ENCODE measurements at regions of chr5 and their contacts with region 1.

Region 1: DNA sequence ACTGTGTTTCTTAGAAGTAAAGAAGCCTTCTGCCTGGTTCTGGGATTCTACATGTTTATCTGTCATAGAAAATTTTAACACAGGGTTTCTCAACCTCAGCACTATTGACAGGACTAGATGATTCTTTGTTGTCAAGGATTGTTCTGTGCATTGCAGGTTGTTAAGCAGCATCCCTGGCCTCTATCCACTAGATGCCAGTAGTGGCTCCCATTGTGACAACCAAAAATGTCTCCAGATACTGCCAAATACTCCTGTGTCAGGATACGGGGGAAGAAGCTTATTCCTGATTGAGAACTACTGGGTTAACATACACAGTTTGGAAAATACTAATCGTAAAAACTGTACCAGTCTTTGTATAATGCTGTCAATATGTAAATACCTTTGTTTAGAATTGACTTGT is 167.1 kb downstream of the NIPBL start:
- DNase-seq: no peak
- ATAC-seq: no peak
- H3K4me3 ChIP-seq: no peak overlapping the region
- H3K27ac ChIP-seq: no peak overlapping the region
- H3K4me1 ChIP-seq: no peaks in the 10 kb centered on the region
- H3K27me3 ChIP-seq: no peaks in the 10 kb centered on the region
- CTCF ChIP-seq: no peak

Region 2: GRCh38 chr5:37086466-37087173 is 42.9 kb after region 1 on chr5:
- intact Hi-C with region 1: no loop called
- DNase-seq: no peak
- ATAC-seq: no peak
- H3K4me3 ChIP-seq: no peak overlapping the region
- H3K27ac ChIP-seq: no peak overlapping the region
- H3K4me1 ChIP-seq: no peaks in the 10 kb centered on the region
- H3K27me3 ChIP-seq: no peaks in the 10 kb centered on the region
- CTCF ChIP-seq: no peak

Region 3: GRCh38 chr5:37153661-37154060 is 110.0 kb after region 1 on chr5:
- intact Hi-C with region 1: loop called in 1 of 2 experiments (anchors 10 kb)
- DNase-seq: no peak
- ATAC-seq: no peak
- H3K4me3 ChIP-seq: no peak overlapping the region
- H3K27ac ChIP-seq: no peak overlapping the region
- H3K4me1 ChIP-seq: no peaks in the 10 kb centered on the region
- H3K27me3 ChIP-seq: no peaks in the 10 kb centered on the region
- CTCF ChIP-seq: no peak

Region 4: DNA sequence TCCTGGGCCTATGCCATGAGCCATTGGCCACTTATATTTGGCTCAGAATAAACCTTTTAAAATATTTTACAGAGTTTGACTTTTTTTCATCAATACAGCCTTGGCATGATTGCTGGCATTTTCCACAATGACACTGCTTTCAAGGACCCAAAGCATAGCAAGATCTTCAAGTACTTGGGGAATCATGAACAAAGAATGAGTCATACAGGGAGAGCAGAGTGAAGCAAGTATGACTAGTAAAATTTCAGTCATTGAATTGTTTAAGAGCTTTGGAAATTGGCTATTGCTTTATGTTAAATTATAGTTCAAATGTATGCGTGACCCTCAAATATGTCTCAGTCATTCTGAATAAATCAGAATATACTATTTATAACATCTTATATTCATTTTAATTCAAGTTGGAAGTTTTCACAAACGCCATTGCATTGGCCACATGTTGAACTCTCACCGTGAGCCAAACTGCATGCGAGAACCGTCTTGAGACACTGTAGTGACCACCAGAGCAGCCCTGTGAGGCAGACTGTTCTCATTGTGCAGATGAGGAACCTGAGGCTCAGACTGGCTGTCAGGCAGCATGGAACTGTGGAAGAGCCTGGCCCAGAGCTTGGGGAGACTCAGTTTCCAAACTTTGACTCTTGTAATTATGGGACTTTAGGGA is 743.3 kb after region 1 on chr5:
- intact Hi-C with region 1: no loop called
- DNase-seq: no peak
- ATAC-seq: no peak
- H3K4me3 ChIP-seq: no peak overlapping the region
- H3K27ac ChIP-seq: no peak overlapping the region
- H3K4me1 ChIP-seq: peaks cover 10% of the 10 kb centered on the region
- H3K27me3 ChIP-seq: no peaks in the 10 kb centered on the region
- CTCF ChIP-seq: no peak